Right cardiac atrium (tissue), 5 donors: ENCODE measurements at regions of chr12 and their contacts with region 1.

Region 1: DNA sequence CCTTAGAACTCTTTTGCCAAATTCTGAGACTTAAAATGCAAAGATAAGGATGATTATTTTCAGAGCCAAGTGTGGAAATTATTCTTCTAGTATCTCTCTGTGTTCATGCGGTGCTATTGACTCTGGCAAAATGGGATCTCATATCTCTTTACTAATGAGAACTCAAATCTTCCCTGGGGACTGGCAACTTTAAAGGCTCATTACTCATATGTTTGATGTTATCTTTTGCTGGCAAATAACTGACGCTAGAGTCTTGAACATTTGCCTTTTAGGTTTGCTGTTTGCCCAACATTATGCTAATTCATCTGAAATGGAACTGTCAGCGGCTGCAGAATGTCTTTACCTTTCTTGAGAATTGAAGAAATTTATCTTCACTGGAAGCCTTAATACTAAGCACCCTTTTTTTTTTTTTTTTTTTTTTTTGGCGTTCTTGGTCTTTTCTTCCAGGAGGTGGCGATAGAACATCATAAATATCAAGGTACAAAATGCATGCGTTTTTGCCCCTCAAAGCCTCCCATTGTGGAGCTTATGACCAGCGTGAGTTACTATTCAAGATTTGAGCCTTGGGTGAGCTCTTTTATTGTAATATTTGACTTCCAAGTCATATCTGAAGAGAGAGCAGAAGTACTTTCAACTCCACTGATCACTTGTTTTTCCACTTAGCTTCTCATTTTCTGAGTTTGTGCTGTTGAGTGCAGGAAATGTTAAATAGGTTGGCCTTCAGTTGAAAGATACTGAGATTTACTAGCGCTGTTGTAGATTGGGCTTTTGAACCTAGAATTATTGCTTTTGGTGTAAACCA is 86.6 kb downstream of the CAND1 start:
- DNase-seq: no peak
- ATAC-seq: peak; percentile 71 to 75
- H3K4me3 ChIP-seq: no peak overlapping the region
- H3K27ac ChIP-seq: no peak overlapping the region
- H3K4me1 ChIP-seq: peaks cover 4% of the 10 kb centered on the region
- H3K27me3 ChIP-seq: no peaks in the 10 kb centered on the region

Region 2: GRCh38 chr12:67052981-67053380 is 302.8 kb before region 1 on chr12:
- intact Hi-C with region 1: no loop called
- DNase-seq: no peak
- ATAC-seq: no peak
- H3K4me3 ChIP-seq: no peak overlapping the region
- H3K27ac ChIP-seq: no peak overlapping the region
- H3K4me1 ChIP-seq: peaks cover 1% of the 10 kb centered on the region
- H3K27me3 ChIP-seq: no peaks in the 10 kb centered on the region

Region 3: DNA sequence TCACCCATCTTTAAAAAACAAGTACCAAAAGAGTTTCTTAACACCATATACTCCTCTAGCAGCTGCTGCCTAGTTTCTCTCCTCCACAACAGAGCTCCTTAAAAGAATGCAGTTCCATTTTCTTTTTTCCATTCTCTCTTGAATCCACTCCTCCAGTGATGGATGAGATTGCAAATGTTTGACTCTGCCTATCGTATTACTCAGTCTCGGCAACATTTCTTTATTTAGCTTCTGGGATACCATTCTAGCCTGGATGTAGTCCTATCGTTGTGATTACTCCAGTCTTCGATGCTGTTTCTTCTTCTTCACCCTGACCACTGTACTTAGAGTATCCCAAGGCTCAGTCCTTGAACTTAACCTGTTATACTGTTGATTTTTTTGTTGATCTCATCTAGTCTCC is 55.9 kb before region 1 on chr12:
- intact Hi-C with region 1: no loop called
- DNase-seq: no peak
- ATAC-seq: no peak
- H3K4me3 ChIP-seq: no peak overlapping the region
- H3K27ac ChIP-seq: no peak overlapping the region
- H3K4me1 ChIP-seq: no peaks in the 10 kb centered on the region
- H3K27me3 ChIP-seq: no peaks in the 10 kb centered on the region

Region 4: GRCh38 chr12:67315661-67316060 is 40.1 kb before region 1 on chr12:
- intact Hi-C with region 1: no loop called
- DNase-seq: no peak
- ATAC-seq: no peak
- H3K4me3 ChIP-seq: no peak overlapping the region
- H3K27ac ChIP-seq: no peak overlapping the region
- H3K4me1 ChIP-seq: no peaks in the 10 kb centered on the region
- H3K27me3 ChIP-seq: no peaks in the 10 kb centered on the region

Region 5: GRCh38 chr12:67415473-67415872 is 59.7 kb after region 1 on chr12:
- intact Hi-C with region 1: loop called in 3 of 4 experiments (anchors 10 kb)
- DNase-seq: no peak
- ATAC-seq: peak; percentile 42 to 70
- H3K4me3 ChIP-seq: no peak overlapping the region
- H3K27ac ChIP-seq: no peak overlapping the region
- H3K4me1 ChIP-seq: peaks cover 7% of the 10 kb centered on the region
- H3K27me3 ChIP-seq: no peaks in the 10 kb centered on the region

Region 6: DNA sequence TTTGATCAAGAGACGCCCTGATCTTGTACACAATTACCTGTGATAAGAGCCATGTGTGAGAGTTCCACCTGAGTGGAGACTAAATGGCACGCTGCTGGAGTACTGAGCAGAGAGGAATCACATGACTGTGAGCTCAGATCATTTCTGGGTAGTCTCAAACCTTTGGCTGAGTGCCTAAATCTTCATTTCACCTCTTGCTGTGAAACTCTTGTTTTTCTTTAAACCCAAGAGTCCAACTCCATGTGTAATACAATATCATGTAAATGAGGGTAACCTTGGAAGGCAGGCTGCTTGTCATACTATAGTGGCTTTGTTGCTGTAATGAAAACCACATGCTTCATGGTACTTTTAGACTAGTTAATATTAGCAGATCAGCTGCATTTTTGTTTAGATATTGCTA is 70.3 kb after region 1 on chr12:
- intact Hi-C with region 1: loop called in 2 of 4 experiments (anchors 10 kb)
- DNase-seq: no peak
- ATAC-seq: no peak
- H3K4me3 ChIP-seq: no peak overlapping the region
- H3K27ac ChIP-seq: no peak overlapping the region
- H3K4me1 ChIP-seq: no peaks in the 10 kb centered on the region
- H3K27me3 ChIP-seq: no peaks in the 10 kb centered on the region

Region 7: DNA sequence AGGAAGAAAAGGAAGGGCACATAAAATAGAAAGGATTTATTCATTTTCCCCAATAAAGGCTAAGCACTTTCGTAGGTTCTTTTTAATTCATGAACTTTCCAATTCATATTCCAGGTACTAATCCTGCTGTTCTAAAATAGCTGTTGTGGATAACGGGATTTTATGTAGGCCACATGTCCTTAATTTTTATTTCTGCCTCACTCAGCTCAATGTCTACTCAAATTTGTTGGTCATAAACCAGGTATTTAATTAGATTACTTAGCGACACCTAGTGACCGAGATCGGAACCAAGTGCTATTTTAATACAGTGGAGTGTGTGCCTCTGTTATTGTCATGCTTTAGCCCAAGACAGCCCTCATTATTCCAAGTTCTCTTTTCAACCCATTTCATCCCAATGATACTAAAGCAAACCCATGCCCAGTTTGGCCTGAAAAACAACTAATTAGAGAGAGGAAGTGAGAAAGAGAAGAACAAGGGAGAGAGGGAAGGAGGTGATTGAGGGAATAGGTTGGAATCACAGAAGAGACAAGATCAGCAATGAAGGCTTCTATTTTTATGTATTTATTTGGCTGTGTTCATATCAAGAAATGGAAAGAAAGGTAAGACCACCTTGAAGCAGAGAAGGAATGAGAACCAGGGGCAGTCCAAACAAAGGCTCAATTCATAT is 587.6 kb after region 1 on chr12:
- intact Hi-C with region 1: loop called (anchors 5 to 10 kb)
- DNase-seq: peak in 1 of 3 donors; percentile 59
- ATAC-seq: peak; percentile 78 to 79
- H3K4me3 ChIP-seq: no peak overlapping the region
- H3K27ac ChIP-seq: no peak overlapping the region
- H3K4me1 ChIP-seq: no peaks in the 10 kb centered on the region
- H3K27me3 ChIP-seq: no peaks in the 10 kb centered on the region